ENCODE measurements at regions of chr1 and their contacts with region 1.

Region 1: GRCh38 chr1:50697440-50698421 is 262.3 kb downstream of the FAF1 start:
- DNase-seq: no peak
- ATAC-seq: no peak
- H3K4me3 Mint-ChIP-seq: no peak overlapping the region
- H3K27ac Mint-ChIP-seq: no peak overlapping the region
- H3K4me1 Mint-ChIP-seq: no peaks in the 10 kb centered on the region
- H3K27me3 Mint-ChIP-seq: no peaks in the 10 kb centered on the region
- CTCF ChIP-seq: no peak

Region 2: GRCh38 chr1:50318428-50318827 is 379.3 kb before region 1 on chr1:
- CTCF ChIA-PET with region 1: no interaction called
- POLR2A ChIA-PET with region 1: no interaction called
- intact Hi-C with region 1: no loop called
- DNase-seq: no peak
- ATAC-seq: no peak
- H3K4me3 Mint-ChIP-seq: no peak overlapping the region
- H3K27ac Mint-ChIP-seq: no peak overlapping the region
- H3K4me1 Mint-ChIP-seq: no peaks in the 10 kb centered on the region
- H3K27me3 Mint-ChIP-seq: peaks cover 3% of the 10 kb centered on the region
- CTCF ChIP-seq: no peak

Region 3: GRCh38 chr1:50717327-50717726 is 19.6 kb after region 1 on chr1:
- CTCF ChIA-PET with region 1: no interaction called
- POLR2A ChIA-PET with region 1: no interaction called
- intact Hi-C with region 1: loop called (anchors 2 kb)
- DNase-seq: no peak
- ATAC-seq: no peak
- H3K4me3 Mint-ChIP-seq: no peak overlapping the region
- H3K27ac Mint-ChIP-seq: no peak overlapping the region
- H3K4me1 Mint-ChIP-seq: peaks cover 8% of the 10 kb centered on the region
- H3K27me3 Mint-ChIP-seq: no peaks in the 10 kb centered on the region
- CTCF ChIP-seq: no peak

Region 4: GRCh38 chr1:50913954-50914353 is 216.2 kb after region 1 on chr1:
- CTCF ChIA-PET with region 1: no interaction called
- POLR2A ChIA-PET with region 1: no interaction called
- intact Hi-C with region 1: no loop called
- DNase-seq: no peak
- ATAC-seq: no peak
- H3K4me3 Mint-ChIP-seq: no peak overlapping the region
- H3K27ac Mint-ChIP-seq: no peak overlapping the region
- H3K4me1 Mint-ChIP-seq: peaks cover 23% of the 10 kb centered on the region
- H3K27me3 Mint-ChIP-seq: no peaks in the 10 kb centered on the region
- CTCF ChIP-seq: no peak

Measured in activated B cell treated with CpG ODN at 0.5 μM for 24 hours (primary cell).